ENCODE measurements at regions of chr4 and their contacts with region 1.

Region 1: DNA sequence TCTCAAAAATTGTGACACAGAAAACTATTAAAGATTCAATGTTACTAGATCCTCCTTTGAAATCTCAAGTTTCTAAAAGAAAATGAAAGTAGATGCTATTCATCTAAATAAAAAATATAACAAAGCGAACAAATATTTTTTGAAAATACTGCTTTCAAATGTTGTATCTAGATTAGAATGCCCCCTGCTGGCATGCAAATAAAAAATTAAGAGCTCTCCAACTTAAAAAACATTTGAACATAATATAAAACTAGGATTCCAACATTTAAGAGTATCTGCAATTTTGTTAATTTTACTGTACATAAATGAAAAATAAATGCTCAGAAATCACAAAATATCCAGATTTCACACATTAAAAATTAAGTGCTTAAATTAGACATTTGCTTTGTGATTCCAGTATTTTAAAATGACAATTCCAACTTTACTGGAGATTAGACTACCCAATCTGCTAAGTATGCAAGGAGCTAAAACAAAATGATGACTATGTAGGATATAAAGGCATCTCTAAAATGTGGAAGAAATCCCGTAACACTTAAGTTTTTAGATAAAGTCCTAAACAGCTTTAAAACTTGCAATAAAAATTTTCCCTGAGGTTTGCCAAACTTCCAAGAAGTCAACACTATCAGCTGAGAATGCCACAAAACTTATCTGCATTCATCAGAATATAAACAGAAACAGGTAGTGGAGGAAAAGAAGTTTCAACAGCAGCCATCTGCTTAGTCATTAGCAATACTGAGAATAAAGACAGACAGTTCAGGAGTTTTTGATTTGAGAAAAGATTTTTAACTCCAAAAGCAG is 32.7 kb downstream of the DHX15 start:
- DNase-seq: no peak
- CTCF ChIP-seq: no peak

Region 2: DNA sequence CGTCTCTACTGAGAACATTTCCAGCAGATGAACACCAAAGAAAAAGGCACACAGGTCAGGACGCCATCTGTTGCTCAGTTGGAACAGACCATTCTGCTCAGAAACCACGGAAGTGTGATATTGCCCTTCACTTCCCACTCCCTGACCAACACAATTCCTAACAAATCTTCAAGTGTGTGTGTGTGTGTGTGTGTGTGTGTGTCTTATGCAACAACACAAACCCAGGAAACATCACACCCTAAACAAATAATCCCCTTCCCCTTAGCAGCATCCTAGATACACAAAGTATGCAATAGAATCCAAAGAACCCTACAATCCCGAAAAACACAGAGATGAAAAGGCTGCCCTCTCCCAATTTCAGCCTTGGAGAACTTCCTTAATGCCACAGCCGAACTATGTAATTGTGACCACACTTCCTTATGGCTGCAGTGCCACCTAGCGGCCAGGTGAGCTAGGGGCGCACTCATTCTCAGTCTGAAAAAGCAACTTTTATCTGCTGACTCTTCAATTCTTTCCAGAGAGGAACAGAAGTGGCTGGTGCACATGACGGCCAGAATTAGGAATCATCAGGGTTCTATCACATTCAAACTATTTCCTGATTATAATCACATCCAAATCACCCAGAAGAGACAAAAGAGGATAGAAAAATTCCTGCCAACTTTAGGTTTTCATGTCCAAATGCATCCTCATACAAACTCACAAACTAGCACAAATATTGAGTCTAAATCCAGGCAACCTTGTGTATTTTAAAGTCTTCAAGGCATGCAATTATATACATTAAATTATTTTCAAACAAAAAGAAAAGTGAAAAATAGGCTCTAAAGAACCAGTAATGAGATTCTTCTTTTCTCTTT is 132.3 kb before region 1 on chr4:
- CTCF ChIA-PET with region 1: no interaction called
- POLR2A ChIA-PET with region 1: no interaction called
- DNase-seq: peak; percentile 73
- CTCF ChIP-seq: peak; percentile 99

Region 3: DNA sequence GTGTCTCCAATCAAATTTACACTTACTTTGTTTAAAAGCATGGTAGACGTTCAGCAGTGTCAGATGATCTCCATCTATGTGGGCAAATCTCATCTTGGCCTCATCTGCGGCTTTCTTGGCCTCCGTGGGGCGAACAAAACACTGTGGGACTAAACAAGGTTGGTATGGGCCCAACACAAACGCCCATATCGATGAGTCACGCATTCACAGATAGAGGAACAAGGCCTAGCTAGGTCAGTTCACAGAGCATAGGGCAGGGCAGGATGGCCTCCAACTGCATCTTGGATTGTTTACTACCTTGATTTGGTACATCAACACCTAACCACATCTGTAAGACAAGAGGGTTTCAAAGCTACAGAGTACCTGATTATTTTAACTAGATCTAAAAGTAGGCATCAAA is 14.7 kb before region 1 on chr4:
- CTCF ChIA-PET with region 1: interaction called, 20 read pairs
- POLR2A ChIA-PET with region 1: no interaction called
- DNase-seq: no peak
- CTCF ChIP-seq: no peak

Region 4: DNA sequence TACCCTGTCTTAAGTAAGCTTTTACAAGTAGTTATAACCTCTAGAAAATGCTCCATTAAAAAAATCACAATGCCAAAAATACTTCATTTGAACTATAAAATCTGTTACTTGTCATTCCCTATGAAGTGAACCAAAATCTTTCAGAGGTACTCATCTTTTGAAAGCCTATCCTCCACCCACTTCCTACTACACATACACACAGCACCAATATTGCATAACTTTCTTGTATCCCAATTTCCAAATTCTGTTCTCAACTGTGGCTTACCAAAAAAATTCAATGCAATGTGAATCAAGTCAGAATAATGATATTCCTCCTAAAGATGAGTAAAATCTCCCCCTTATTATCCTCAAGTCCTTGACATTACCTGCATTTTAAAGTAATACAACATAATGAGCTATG is 16.7 kb after region 1 on chr4:
- CTCF ChIA-PET with region 1: interaction called, 28 read pairs
- POLR2A ChIA-PET with region 1: no interaction called
- DNase-seq: no peak
- CTCF ChIP-seq: no peak

Measured in GM10248 (cell line).